ENCODE measurements at regions of chr12 and their contacts with region 1.

Region 1: GRCh38 chr12:29519585-29520182 is 22.2 kb upstream of the OVCH1 start:
- DNase-seq: no peak
- ATAC-seq: peak; percentile 71
- H3K4me3 ChIP-seq: no peak overlapping the region
- H3K27ac ChIP-seq: no peak overlapping the region
- H3K4me1 ChIP-seq: no peaks in the 10 kb centered on the region
- H3K27me3 ChIP-seq: no peaks in the 10 kb centered on the region
- CTCF ChIP-seq: peak; percentile 40 to 66 (median 52); a peak in 5 of 6 replicates
- EP300 ChIP-seq: no peak
- POLR2A ChIP-seq: no peak
- RAD21 ChIP-seq: peak; percentile 71

Region 2: GRCh38 chr12:29534935-29535334 is 15.3 kb after region 1 on chr12:
- CTCF ChIA-PET with region 1: interaction called, 8 read pairs
- POLR2A ChIA-PET with region 1: no interaction called
- RAD21 ChIA-PET with region 1: interaction called, 12 read pairs
- SMC1A ChIA-PET with region 1: interaction called, 9 read pairs
- in situ Hi-C with region 1: no loop called
- intact Hi-C with region 1: no loop called
- DNase-seq: no peak
- ATAC-seq: peak; percentile 26; the same call in 2 of the 3 replicates
- H3K4me3 ChIP-seq: no peak overlapping the region
- H3K27ac ChIP-seq: no peak overlapping the region
- H3K4me1 ChIP-seq: no peaks in the 10 kb centered on the region
- H3K27me3 ChIP-seq: no peaks in the 10 kb centered on the region
- CTCF ChIP-seq: no peak
- EP300 ChIP-seq: no peak
- POLR2A ChIP-seq: no peak
- RAD21 ChIP-seq: no peak

Region 3: DNA sequence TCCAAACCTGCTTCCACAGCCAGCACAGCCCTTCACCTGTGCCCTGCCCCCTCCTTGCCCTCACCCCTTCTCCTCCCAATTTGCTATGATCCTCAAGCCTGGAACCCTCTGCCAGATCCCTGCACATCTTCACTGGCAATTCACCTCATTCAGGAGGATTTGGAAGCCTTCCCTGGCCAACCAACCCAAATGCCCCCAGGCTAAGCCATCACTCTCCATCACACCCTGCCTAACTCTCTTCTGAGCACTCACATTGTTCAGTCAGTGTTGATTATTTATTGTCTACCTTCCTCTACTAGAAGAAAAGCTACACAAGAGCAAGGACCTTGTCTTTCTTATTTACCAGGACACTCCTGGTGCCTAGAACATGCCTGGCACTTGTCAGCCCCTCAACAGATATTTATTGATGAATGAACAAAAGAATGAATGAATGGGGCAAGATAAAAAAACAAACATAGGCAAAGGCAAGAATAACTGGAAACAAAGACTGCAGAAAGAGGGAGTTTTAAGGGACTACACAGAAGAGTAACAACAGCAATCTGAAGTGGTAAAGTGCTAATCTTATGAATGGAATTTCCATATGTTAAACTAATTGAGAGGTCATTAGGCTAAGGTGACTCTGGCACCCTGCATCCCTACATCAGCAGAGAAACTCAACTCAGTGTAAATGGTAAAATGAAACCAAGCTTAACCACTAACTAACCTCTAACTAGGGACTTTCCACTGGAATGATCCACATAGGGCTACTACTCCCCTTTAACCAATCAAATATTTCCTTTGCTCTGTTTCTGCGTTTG is 230.6 kb after region 1 on chr12:
- CTCF ChIA-PET with region 1: no interaction called
- POLR2A ChIA-PET with region 1: no interaction called
- RAD21 ChIA-PET with region 1: no interaction called
- SMC1A ChIA-PET with region 1: no interaction called
- in situ Hi-C with region 1: no loop called
- intact Hi-C with region 1: no loop called
- DNase-seq: peak; percentile 75
- ATAC-seq: peak; percentile 95
- H3K4me3 ChIP-seq: no peak overlapping the region
- H3K27ac ChIP-seq: no peak overlapping the region
- H3K4me1 ChIP-seq: peaks cover 9% of the 10 kb centered on the region
- H3K27me3 ChIP-seq: no peaks in the 10 kb centered on the region
- CTCF ChIP-seq: no peak
- EP300 ChIP-seq: peak in 1 of 2 experiments; percentile 41; a peak in 1 of 4 replicates
- POLR2A ChIP-seq: no peak
- RAD21 ChIP-seq: no peak

Region 4: DNA sequence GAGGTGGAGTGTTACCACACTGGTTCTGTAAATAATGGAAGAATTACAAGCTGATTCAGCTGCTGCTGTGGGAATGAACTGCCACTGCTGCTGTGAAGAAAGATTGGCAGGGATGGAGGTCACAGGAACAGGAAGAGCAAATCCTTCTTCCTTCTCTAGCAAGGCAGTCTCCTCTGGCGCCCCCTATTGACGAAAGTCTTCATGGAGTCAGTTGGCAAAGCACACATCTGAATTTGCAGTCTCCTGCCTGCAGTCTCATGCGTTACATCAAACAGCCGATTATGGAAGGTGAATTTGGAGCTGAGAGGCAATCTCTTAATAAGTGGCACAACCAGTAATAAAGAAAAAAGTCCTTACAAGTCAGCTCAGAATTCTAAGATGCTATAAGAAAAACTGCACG is 370.1 kb after region 1 on chr12:
- CTCF ChIA-PET with region 1: interaction called, 16 read pairs
- POLR2A ChIA-PET with region 1: no interaction called
- RAD21 ChIA-PET with region 1: interaction called, 9 read pairs
- SMC1A ChIA-PET with region 1: interaction called, 23 read pairs
- in situ Hi-C with region 1: no loop called
- intact Hi-C with region 1: no loop called
- DNase-seq: no peak
- ATAC-seq: no peak
- H3K4me3 ChIP-seq: no peak overlapping the region
- H3K27ac ChIP-seq: no peak overlapping the region
- H3K4me1 ChIP-seq: no peaks in the 10 kb centered on the region
- H3K27me3 ChIP-seq: no peaks in the 10 kb centered on the region
- CTCF ChIP-seq: peak; percentile 10 to 44 (median 22); a peak in 3 of 6 replicates
- EP300 ChIP-seq: no peak
- POLR2A ChIP-seq: no peak
- RAD21 ChIP-seq: 0 out of 2 replicates have a peak, but pooled peaks have one; percentile 20

Region 5: GRCh38 chr12:30134229-30134628 is 614.5 kb after region 1 on chr12:
- CTCF ChIA-PET with region 1: interaction called, 33 read pairs
- POLR2A ChIA-PET with region 1: interaction called, 3 read pairs
- RAD21 ChIA-PET with region 1: interaction called, 24 read pairs
- SMC1A ChIA-PET with region 1: interaction called, 15 read pairs
- in situ Hi-C with region 1: no loop called
- intact Hi-C with region 1: loop called (anchors 2 kb)
- DNase-seq: no peak
- ATAC-seq: peak; percentile 77
- H3K4me3 ChIP-seq: no peak overlapping the region
- H3K27ac ChIP-seq: no peak overlapping the region
- H3K4me1 ChIP-seq: no peaks in the 10 kb centered on the region
- H3K27me3 ChIP-seq: no peaks in the 10 kb centered on the region
- CTCF ChIP-seq: peak in 2 of 3 experiments; percentile 24 to 33; a peak in 3 of 6 replicates
- EP300 ChIP-seq: no peak
- POLR2A ChIP-seq: no peak
- RAD21 ChIP-seq: no peak

Region 6: DNA sequence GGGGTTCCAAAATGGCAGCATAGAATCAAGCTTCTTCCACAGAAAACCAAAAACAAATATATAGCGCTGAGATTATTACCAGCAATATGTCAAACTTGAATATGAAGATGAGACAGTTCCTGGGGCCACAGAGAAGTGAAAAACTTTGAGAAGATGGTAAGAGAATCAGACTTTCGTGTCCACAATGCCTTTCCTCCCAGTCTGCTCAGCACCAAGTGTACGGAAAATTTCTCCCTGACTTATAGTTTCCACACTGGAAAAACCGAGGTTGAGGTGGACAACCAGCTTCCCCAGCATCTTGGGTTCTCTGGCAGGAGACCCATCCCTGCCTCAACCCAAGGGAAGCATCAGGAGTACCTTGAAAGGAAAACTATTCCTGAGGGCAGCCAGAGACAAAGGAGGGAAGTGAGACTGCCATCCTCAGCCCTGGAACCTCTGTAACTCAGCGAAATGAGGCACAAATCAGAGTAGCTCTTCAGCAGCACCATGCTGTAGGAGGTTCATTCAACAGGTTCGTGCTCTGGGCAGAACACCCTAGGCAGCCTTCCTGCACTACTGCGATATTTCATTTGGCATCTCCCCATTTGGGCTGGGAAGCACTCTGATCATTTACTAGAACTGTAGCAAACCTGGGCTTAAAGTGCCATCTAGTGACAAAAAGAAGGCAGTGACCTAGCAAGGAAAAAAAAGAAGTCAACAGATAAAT is 1287.5 kb after region 1 on chr12:
- CTCF ChIA-PET with region 1: interaction called, 6 read pairs
- POLR2A ChIA-PET with region 1: no interaction called
- RAD21 ChIA-PET with region 1: interaction called, 3 read pairs
- SMC1A ChIA-PET with region 1: interaction called, 15 read pairs
- in situ Hi-C with region 1: loop called (anchors 10 kb)
- intact Hi-C with region 1: loop called (anchors 2 kb)
- DNase-seq: peak; percentile 21
- ATAC-seq: peak; percentile 86
- H3K4me3 ChIP-seq: no peak overlapping the region
- H3K27ac ChIP-seq: no peak overlapping the region
- H3K4me1 ChIP-seq: no peaks in the 10 kb centered on the region
- H3K27me3 ChIP-seq: no peaks in the 10 kb centered on the region
- CTCF ChIP-seq: peak; percentile 68 to 80 (median 77)
- EP300 ChIP-seq: no peak
- POLR2A ChIP-seq: no peak
- RAD21 ChIP-seq: peak; percentile 95